Right cardiac atrium (tissue), 5 donors: ENCODE measurements at regions of chr18 and their contacts with region 1.

Region 1: GRCh38 chr18:57434536-57435494 is at the start of gene ONECUT2:
- DNase-seq: peak; percentile 93 to 96 (median 96)
- ATAC-seq: peak; percentile 99 to 100
- H3K4me3 ChIP-seq: peak within 1 kb of the TSS; percentile 55
- H3K27ac ChIP-seq: no peak within 1 kb of the TSS
- H3K4me1 ChIP-seq: no peaks in the 10 kb centered on the region
- H3K27me3 ChIP-seq: no peaks in the 10 kb centered on the region
- total RNA-seq, gene ONECUT2: 0.03 to 0.20 (median 0.09) TPM in 3 of 4 donors, not detected in the other

Region 2: GRCh38 chr18:55999641-56000040 is 1435.2 kb before region 1 on chr18:
- intact Hi-C with region 1: no loop called
- DNase-seq: no peak
- ATAC-seq: peak in 1 of 2 donors; percentile 49
- H3K4me3 ChIP-seq: no peak overlapping the region
- H3K27ac ChIP-seq: no peak overlapping the region
- H3K4me1 ChIP-seq: no peaks in the 10 kb centered on the region
- H3K27me3 ChIP-seq: no peaks in the 10 kb centered on the region

Region 3: DNA sequence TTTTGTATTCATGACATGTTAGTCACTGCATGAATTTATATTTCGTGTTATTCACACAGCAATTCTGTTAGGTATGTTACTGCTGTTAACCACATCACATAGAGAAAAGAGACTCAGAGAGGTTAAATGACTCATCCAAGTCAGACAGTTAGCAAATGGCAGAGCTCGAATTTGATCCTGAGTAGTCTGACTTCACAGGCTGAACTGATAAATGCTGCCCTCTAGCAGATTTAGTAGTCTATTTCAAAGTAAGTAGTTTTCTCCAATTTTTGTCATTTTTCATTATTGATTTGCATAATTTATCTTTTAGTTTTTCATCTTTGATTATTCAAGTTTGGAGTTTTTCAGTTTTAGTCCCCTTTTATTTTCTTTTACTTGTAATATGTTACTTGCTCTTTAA is 725.4 kb before region 1 on chr18:
- intact Hi-C with region 1: loop called in 1 of 4 experiments (anchors 10 kb)
- DNase-seq: no peak
- ATAC-seq: no peak
- H3K4me3 ChIP-seq: no peak overlapping the region
- H3K27ac ChIP-seq: no peak overlapping the region
- H3K4me1 ChIP-seq: no peaks in the 10 kb centered on the region
- H3K27me3 ChIP-seq: no peaks in the 10 kb centered on the region

Region 4: GRCh38 chr18:57497372-57498294 is 62.8 kb after region 1 on chr18:
- intact Hi-C with region 1: no loop called
- DNase-seq: no peak
- ATAC-seq: peak; percentile 68 to 78
- H3K4me3 ChIP-seq: no peak overlapping the region
- H3K27ac ChIP-seq: no peak overlapping the region
- H3K4me1 ChIP-seq: no peaks in the 10 kb centered on the region
- H3K27me3 ChIP-seq: no peaks in the 10 kb centered on the region

Region 5: DNA sequence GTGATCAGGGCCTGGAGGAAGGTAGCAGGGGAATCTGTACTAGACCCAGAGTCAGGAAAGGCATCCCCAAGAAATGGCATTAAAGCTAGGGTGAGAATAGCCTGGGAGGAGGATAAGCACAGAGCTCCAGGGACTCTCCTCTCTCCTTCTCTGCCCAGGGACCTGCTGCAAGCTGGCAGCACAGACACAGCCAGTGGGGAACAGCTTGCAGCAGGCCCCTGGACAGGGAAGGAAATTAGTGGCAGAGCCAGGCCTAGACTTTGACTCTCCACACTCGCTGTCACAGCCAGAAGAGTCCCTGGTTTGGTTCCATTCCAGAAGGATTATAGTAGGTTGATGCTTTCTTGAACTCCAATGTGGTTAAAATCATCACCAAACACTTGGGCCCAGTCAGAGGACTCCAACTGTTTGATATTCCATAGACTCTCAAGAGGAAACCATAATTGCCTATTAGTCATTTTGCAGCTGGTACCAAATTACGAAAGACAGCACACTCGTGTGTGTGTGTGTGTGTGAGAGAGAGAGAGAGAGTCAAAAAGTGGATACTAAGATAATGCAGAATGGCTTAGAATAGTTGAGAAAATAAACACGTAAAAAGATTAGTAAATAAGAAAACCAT is 463.8 kb after region 1 on chr18:
- intact Hi-C with region 1: no loop called
- DNase-seq: no peak
- ATAC-seq: no peak
- H3K4me3 ChIP-seq: no peak overlapping the region
- H3K27ac ChIP-seq: no peak overlapping the region
- H3K4me1 ChIP-seq: no peaks in the 10 kb centered on the region
- H3K27me3 ChIP-seq: no peaks in the 10 kb centered on the region